HepG2 (cell line): ENCODE measurements at regions of chr2 and their contacts with region 1.

Region 1: DNA sequence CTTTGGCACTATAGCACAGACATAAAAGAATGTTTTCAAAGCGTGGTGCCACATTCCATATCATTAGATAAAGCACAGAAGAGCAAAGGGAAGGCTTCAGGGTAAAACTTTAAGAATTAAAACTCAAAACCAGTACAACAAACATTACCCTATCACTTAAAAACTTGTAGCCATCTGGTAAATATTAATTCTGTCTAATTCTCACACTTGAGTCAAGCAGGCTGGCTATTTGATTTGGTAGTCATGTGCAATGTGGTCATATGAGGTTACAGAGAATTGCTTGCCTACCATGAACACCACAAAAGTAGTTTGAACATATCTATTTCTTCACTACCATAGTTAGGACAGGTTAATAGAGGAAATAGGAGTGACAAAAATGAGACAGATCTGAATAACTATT is 244.9 kb downstream of the IRS1 start:
- DNase-seq: no peak
- ATAC-seq: no peak
- H3K4me3 ChIP-seq: no peak overlapping the region
- H3K27ac ChIP-seq: no peak overlapping the region
- H3K4me1 ChIP-seq: peaks cover 36% of the 10 kb centered on the region
- H3K27me3 ChIP-seq: no peaks in the 10 kb centered on the region
- CTCF ChIP-seq: no peak
- EP300 ChIP-seq: no peak
- POLR2A ChIP-seq: no peak
- RAD21 ChIP-seq: no peak

Region 2: GRCh38 chr2:226411727-226412360 is 142.9 kb before region 1 on chr2:
- CTCF ChIA-PET with region 1: no interaction called
- POLR2A ChIA-PET with region 1: no interaction called
- in situ Hi-C with region 1: no loop called
- intact Hi-C with region 1: no loop called
- DNase-seq: peak; percentile 95
- ATAC-seq: peak; percentile 96
- H3K4me3 ChIP-seq: no peak overlapping the region
- H3K27ac ChIP-seq: peak overlapping the region; percentile 1
- H3K4me1 ChIP-seq: peaks cover 22% of the 10 kb centered on the region
- H3K27me3 ChIP-seq: no peaks in the 10 kb centered on the region
- CTCF ChIP-seq: no peak
- EP300 ChIP-seq: peak in 1 of 2 experiments; percentile 97; a peak in 2 of 4 replicates
- POLR2A ChIP-seq: no peak
- RAD21 ChIP-seq: no peak

Region 3: GRCh38 chr2:226483745-226484619 is 70.7 kb before region 1 on chr2:
- CTCF ChIA-PET with region 1: no interaction called
- POLR2A ChIA-PET with region 1: no interaction called
- in situ Hi-C with region 1: no loop called
- intact Hi-C with region 1: loop called (anchors 5 kb)
- DNase-seq: peak; percentile 67
- ATAC-seq: peak; percentile 81
- H3K4me3 ChIP-seq: no peak overlapping the region
- H3K27ac ChIP-seq: no peak overlapping the region
- H3K4me1 ChIP-seq: peaks cover 25% of the 10 kb centered on the region
- H3K27me3 ChIP-seq: no peaks in the 10 kb centered on the region
- CTCF ChIP-seq: no peak
- EP300 ChIP-seq: 0 out of 4 replicates have a peak, but pooled peaks of 1 of the 2 experiments have one; percentile 17
- POLR2A ChIP-seq: no peak
- RAD21 ChIP-seq: no peak